Heart left ventricle (tissue), 16 donors: ENCODE measurements at regions of chr12 and their contacts with region 1.

Region 1: GRCh38 chr12:11202811-11203210 is 16.1 kb upstream of the TAS2R42 start:
- DNase-seq: no peak
- ATAC-seq: no peak
- H3K4me3 ChIP-seq: no peak overlapping the region
- H3K27ac ChIP-seq: no peak overlapping the region
- H3K4me1 ChIP-seq: no peaks in the 10 kb centered on the region
- H3K27me3 ChIP-seq: no peaks in the 10 kb centered on the region
- CTCF ChIP-seq: no peak
- POLR2A ChIP-seq: no peak

Region 2: GRCh38 chr12:10771132-10771733 is 431.6 kb before region 1 on chr12:
- intact Hi-C with region 1: loop called (anchors 1 to 5 kb)
- DNase-seq: no peak
- ATAC-seq: no peak
- H3K4me3 ChIP-seq: no peak overlapping the region
- H3K27ac ChIP-seq: no peak overlapping the region
- H3K4me1 ChIP-seq: no peaks in the 10 kb centered on the region
- H3K27me3 ChIP-seq: peaks cover 0 to 46% (median 13%) of the 10 kb centered on the region in 9 donors
- CTCF ChIP-seq: peak; percentile 53 to 87 (median 72)
- POLR2A ChIP-seq: no peak

Region 3: DNA sequence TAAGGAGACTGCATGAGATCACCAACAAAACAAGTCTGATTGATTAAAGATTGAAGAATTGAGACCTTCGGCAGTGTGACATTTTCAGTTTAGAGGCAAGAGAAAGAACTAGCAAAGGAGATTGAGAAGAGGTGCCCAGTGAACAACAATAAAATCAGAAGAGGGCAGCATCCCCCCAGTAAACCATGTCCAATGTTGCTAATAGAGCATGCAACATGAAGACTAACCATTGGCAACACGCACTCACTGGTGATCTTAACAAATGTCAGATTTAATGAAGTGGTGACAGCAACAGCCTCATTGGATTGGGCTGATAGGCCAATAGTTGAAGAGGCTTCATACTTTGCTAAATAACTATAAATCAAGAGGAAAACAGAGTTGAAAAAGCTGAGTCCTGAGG is 243.0 kb before region 1 on chr12:
- intact Hi-C with region 1: loop called in 4 of 10 experiments (anchors 5 to 10 kb)
- DNase-seq: no peak
- ATAC-seq: peak in 3 of 4 donors; percentile 41 to 69 (median 47)
- H3K4me3 ChIP-seq: no peak overlapping the region
- H3K27ac ChIP-seq: no peak overlapping the region
- H3K4me1 ChIP-seq: peaks cover 0 to 6% (median 0%) of the 10 kb centered on the region in 12 donors
- H3K27me3 ChIP-seq: no peaks in the 10 kb centered on the region
- CTCF ChIP-seq: peak in 5 of 12 donors; percentile 10 to 25 (median 21)
- POLR2A ChIP-seq: no peak

Region 4: GRCh38 chr12:11162502-11162901 is 40.3 kb before region 1 on chr12:
- intact Hi-C with region 1: no loop called
- DNase-seq: no peak
- ATAC-seq: no peak
- H3K4me3 ChIP-seq: no peak overlapping the region
- H3K27ac ChIP-seq: no peak overlapping the region
- H3K4me1 ChIP-seq: peaks cover 0 to 23% (median 5%) of the 10 kb centered on the region in 12 donors
- H3K27me3 ChIP-seq: no peaks in the 10 kb centered on the region
- CTCF ChIP-seq: no peak
- POLR2A ChIP-seq: no peak